Endothelial cell of umbilical vein (primary cell): ENCODE measurements at regions of chr13 and their contacts with region 1.

Region 1: DNA sequence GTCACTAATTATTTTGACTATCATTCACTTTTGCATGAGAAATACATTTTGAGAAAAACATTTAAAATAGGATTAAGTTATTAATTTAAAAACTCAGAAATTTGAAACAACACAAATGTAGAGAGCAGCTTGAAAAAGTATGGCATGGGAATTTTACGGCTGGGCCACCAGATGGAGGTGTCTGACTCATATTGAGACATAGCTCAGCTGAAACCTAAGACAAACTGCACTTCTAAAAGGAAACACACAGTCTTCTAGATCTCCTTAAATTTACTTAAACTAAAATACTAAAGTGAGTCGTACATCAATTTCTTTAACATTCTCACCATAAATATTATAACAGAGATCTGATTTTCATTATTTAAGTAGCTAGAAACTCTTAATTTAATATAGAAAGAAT is 41.9 kb upstream of the POSTN start:
- DNase-seq: peak; percentile 79
- H3K4me3 ChIP-seq: no peak overlapping the region
- H3K27ac ChIP-seq: no peak overlapping the region
- H3K4me1 ChIP-seq: no peaks in the 10 kb centered on the region
- H3K27me3 ChIP-seq: no peaks in the 10 kb centered on the region
- CTCF ChIP-seq: peak; percentile 47 to 56
- POLR2A ChIP-seq: no peak

Region 2: GRCh38 chr13:37701972-37702371 is 61.5 kb after region 1 on chr13:
- CTCF ChIA-PET with region 1: interaction called, 4 read pairs
- POLR2A ChIA-PET with region 1: no interaction called
- dilution Hi-C with region 1: no loop called
- intact Hi-C with region 1: loop called (anchors 2 kb)
- DNase-seq: peak; percentile 51
- H3K4me3 ChIP-seq: no peak overlapping the region
- H3K27ac ChIP-seq: peak overlapping the region; percentile 95
- H3K4me1 ChIP-seq: peaks cover 24% of the 10 kb centered on the region
- H3K27me3 ChIP-seq: no peaks in the 10 kb centered on the region
- CTCF ChIP-seq: no peak
- POLR2A ChIP-seq: no peak

Region 3: DNA sequence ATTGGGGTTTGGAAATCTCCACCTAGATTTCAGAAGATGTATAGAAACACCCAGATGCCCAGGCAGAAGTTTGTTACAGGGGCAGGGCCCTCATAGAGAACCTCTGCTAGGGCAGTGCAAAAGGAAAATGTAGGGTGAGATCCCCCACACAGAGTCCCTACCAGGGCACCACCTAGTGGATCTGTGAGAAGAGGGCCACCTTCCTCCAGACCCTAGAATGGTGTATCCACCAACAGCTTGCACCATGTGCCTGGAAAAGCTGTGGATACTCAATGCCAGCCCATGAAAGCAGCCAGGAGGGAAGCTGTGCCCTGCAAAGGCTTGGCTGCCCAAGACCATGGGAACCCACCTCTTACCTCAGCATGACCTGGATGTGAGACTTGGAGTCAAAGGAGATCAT is 196.6 kb after region 1 on chr13:
- CTCF ChIA-PET with region 1: interaction called, 5 read pairs
- POLR2A ChIA-PET with region 1: no interaction called
- dilution Hi-C with region 1: no loop called
- intact Hi-C with region 1: loop called (anchors 2 kb)
- DNase-seq: no peak
- H3K4me3 ChIP-seq: no peak overlapping the region
- H3K27ac ChIP-seq: no peak overlapping the region
- H3K4me1 ChIP-seq: no peaks in the 10 kb centered on the region
- H3K27me3 ChIP-seq: no peaks in the 10 kb centered on the region
- CTCF ChIP-seq: no peak
- POLR2A ChIP-seq: no peak

Region 4: GRCh38 chr13:37944869-37945442 is 304.5 kb after region 1 on chr13:
- CTCF ChIA-PET with region 1: interaction called, 14 read pairs
- POLR2A ChIA-PET with region 1: no interaction called
- dilution Hi-C with region 1: no loop called
- intact Hi-C with region 1: no loop called
- DNase-seq: no peak
- H3K4me3 ChIP-seq: no peak overlapping the region
- H3K27ac ChIP-seq: no peak overlapping the region
- H3K4me1 ChIP-seq: no peaks in the 10 kb centered on the region
- H3K27me3 ChIP-seq: no peaks in the 10 kb centered on the region
- CTCF ChIP-seq: no peak
- POLR2A ChIP-seq: no peak

Region 5: GRCh38 chr13:38349390-38350113 is 709.1 kb after region 1 on chr13 and contains the start of gene UFM1:
- CTCF ChIA-PET with region 1: interaction called, 5 read pairs
- POLR2A ChIA-PET with region 1: no interaction called
- dilution Hi-C with region 1: no loop called
- intact Hi-C with region 1: loop called (anchors 1 kb)
- DNase-seq: peak; percentile 96
- H3K4me3 ChIP-seq: peak within 1 kb of the TSS; percentile 61 to 95 (median 89)
- H3K27ac ChIP-seq: peak within 1 kb of the TSS; percentile 97
- H3K4me1 ChIP-seq: peaks cover 18% of the 10 kb centered on the region
- H3K27me3 ChIP-seq: no peaks in the 10 kb centered on the region
- CTCF ChIP-seq: no peak
- POLR2A ChIP-seq: peak; percentile 83
- total RNA-seq, gene UFM1: 41.0 and 51.5 TPM in 2 replicates

Region 6: GRCh38 chr13:38763439-38764381 is 1123.2 kb after region 1 on chr13:
- CTCF ChIA-PET with region 1: interaction called, 3 read pairs
- POLR2A ChIA-PET with region 1: no interaction called
- dilution Hi-C with region 1: no loop called
- intact Hi-C with region 1: loop called (anchors 5 kb)
- DNase-seq: peak; percentile 22
- H3K4me3 ChIP-seq: no peak overlapping the region
- H3K27ac ChIP-seq: no peak overlapping the region
- H3K4me1 ChIP-seq: no peaks in the 10 kb centered on the region
- H3K27me3 ChIP-seq: peaks cover 1 to 4% of the 10 kb centered on the region in 2 experiments
- CTCF ChIP-seq: peak; percentile 20 to 37
- POLR2A ChIP-seq: no peak